GM18951 (cell line): ENCODE measurements at regions of chr3 and their contacts with region 1.

Region 1: DNA sequence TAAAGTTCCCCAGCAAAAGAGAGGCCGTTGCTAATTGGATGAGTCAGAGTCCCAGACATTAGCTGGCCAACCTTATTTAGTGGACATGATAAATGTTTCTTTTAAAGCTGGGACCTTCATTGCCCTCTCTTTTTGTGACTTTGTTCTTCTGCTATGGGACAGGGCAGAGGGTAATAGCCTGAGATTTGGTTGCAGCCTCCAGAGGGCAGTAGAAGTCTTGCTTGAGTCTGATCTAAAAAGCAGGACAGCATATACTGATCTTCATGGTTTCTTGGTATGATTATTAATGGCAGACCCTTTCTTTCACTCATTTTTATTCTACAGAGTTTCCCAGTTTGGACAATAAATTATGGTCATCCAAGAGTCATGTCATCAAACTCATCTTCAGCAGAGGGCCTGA is 25.1 kb upstream of the ZKSCAN7 start:
- POLR2A ChIP-seq: no peak

Region 2: DNA sequence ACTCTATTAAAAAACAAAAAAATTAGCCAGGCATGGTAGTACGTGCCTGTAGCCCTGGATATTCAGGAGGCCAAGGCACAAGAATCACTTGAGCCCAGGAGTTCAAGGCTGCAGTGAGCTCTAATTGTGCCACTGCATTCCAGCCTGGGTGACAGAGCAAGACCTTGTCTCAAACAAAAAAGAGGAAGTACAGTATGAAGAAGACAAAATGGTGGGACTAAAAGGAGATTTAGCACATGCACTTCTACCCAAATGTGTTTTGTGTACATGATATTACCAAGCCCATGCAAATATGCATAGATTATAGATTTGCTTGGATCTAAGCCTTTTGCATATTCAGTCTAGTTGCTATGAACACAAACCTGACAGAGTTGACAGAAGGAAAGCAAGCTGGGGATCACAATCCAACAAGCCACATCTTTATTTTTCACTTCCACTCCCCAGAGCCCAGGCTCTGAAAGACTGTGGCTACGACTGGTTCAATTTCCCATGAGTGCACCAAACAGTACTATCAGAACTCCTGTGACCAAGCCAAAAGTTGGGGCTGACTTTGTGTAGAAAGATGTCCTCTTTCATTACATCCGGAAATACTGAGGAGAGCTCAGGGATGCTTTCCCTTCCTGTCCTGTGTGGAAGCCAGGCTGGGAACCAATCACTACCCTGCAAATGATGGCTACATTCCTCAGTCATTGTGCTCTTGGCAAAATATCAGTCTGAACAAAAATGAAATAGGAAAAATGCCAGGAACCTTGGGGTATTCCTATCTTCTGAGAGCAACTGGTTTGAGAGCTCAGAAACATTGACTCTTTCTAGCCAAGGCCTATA is 393.9 kb after region 1 on chr3:
- in situ Hi-C with region 1: loop called (anchors 5 kb)
- POLR2A ChIP-seq: no peak

Region 3: DNA sequence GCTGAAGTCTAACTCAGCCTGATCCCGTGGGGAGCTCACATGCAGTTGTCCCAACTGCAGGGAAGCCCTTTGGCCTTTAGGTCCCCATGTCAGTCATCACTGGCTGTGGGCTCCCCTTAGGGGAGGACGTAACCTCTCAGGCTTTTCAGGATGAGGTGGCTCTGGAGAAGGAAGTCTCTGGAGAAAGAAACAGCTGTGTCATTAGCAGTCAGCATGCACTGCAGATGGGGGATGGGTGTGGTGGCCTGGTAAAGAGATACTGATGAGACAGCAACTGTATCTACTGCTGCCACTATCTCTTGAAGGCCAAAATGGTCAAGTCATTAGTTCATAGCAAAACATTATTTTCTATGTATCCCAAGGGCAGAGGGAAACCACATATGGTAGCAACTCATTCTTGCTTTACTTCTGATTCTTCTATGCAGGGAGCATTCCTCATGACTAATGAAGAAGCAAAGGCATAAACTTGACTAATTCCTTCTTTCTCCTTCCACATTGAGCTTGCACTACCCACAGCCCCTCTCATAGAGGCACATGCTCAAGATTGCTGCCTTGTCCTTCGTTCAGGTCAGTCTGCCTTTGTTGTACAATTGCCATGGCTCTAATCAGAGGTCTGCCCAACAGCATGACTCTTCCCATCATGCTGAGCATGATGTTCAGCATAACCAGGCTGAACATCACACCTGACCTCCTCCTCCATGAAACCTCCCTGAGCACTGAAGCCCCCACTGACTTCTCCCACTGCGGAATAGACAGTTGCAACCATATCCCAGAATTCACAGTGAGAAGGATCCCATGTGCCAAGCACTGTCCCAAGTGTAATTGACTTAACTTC is 744.0 kb after region 1 on chr3:
- in situ Hi-C with region 1: no loop called
- POLR2A ChIP-seq: no peak